Dorsolateral prefrontal cortex (tissue), 120 donors: ENCODE measurements at regions of chr18 and their contacts with region 1.

Region 1: DNA sequence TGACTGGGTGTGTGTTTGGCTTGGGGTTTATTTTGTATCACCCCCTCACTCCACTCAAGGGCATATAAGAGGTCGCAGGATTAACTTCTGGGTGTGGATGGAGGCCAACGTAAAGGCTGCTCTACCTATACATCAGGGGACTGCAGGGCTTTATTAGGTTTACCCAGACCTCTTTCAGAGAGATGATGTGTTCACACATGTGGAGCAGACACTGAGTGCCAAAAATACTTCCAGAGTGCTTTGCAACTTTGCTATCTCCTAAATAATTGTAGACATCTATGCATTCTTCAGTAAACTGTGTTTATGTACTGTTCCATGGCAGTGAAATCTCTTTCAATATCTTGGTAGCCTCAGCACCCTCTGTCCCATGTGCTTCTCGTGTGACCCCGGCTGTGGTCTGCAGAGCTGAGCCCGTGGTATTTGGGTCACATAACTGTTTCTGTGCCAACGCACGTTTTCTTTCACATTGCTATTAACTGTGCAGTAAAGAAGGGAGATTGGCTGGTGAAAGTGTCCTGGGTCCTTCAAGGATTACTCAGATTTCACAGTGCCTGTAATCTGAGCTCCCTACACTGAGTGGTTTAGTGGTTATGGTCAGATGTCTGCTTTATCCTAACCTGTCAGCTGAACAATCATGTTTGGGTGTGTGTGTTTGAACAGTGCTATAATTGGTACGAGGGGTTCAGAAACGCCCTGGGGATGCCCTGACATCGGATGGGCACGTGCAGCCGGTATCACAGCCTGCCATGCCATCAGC is 208.1 kb downstream of the VAPA start:
- DNase-seq: no peak
- H3K4me3 ChIP-seq: no peak overlapping the region
- H3K27ac ChIP-seq: no peak overlapping the region
- H3K27me3 ChIP-seq: no peaks in the 10 kb centered on the region
- CTCF ChIP-seq: no peak

Region 2: DNA sequence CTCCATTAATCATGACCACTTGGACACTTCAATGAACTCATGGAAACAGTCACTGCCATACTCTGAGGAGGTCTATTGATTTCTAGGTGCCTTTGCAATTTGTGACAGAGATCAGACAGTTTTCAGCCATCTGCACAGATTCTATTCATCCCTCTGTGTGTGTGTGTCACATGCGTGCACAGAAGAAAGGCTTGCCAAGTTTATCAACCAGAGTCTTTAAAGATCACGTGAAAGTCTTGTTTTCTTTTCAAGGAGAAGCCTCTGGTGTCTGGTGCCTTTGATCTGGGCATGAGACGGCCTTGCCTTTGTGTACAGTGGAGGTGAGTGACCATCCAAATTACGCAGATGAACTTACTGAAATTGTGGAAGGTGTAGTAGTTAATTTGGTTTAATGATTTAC is 44.0 kb before region 1 on chr18:
- intact Hi-C with region 1: loop called in 1 of 2 experiments (anchors 2 kb)
- DNase-seq: no peak
- H3K4me3 ChIP-seq: no peak overlapping the region
- H3K27ac ChIP-seq: no peak overlapping the region
- H3K27me3 ChIP-seq: no peaks in the 10 kb centered on the region
- CTCF ChIP-seq: no peak

Region 3: GRCh38 chr18:10169064-10169562 is 47.1 kb after region 1 on chr18:
- intact Hi-C with region 1: no loop called
- DNase-seq: no peak
- H3K4me3 ChIP-seq: no peak overlapping the region
- H3K27ac ChIP-seq: no peak overlapping the region
- H3K27me3 ChIP-seq: no peaks in the 10 kb centered on the region
- CTCF ChIP-seq: no peak